ENCODE measurements at regions of chr19 and their contacts with region 1.

Region 1: GRCh38 chr19:11482384-11483050 is 1.7 kb upstream of the ELAVL3 start:
- DNase-seq: peak; percentile 57 to 90
- H3K4me3 ChIP-seq: peak overlapping the region; percentile 6; the same call in 1 of the 2 replicates
- H3K4me1 ChIP-seq: peaks cover 5% of the 10 kb centered on the region
- H3K27me3 ChIP-seq: peaks cover 15% of the 10 kb centered on the region

Region 2: GRCh38 chr19:11293433-11294389 is 188.8 kb before region 1 on chr19:
- in situ Hi-C with region 1: loop called (anchors 10 kb)
- DNase-seq: peak; percentile 93 to 97
- H3K4me3 ChIP-seq: peak overlapping the region; percentile 14
- H3K4me1 ChIP-seq: peaks cover 4% of the 10 kb centered on the region; the same call in 1 of the 2 replicates
- H3K27me3 ChIP-seq: no peaks in the 10 kb centered on the region